H1 (cell line): ENCODE measurements at regions of chr3 and their contacts with region 1.

Region 1: GRCh38 chr3:4107430-4107829 is 195.7 kb upstream of the SETMAR start:
- DNase-seq: no peak
- H3K4me3 ChIP-seq: no peak overlapping the region
- H3K27ac ChIP-seq: no peak overlapping the region
- H3K4me1 ChIP-seq: no peaks in the 10 kb centered on the region
- H3K27me3 ChIP-seq: no peaks in the 10 kb centered on the region
- CTCF ChIP-seq: peak in 2 of 3 experiments; percentile 34 to 53; a peak in 3 of 4 replicates
- EP300 ChIP-seq: no peak
- POLR2A ChIP-seq: no peak
- RAD21 ChIP-seq: peak; percentile 25 to 50; a peak in 3 of 4 replicates

Region 2: DNA sequence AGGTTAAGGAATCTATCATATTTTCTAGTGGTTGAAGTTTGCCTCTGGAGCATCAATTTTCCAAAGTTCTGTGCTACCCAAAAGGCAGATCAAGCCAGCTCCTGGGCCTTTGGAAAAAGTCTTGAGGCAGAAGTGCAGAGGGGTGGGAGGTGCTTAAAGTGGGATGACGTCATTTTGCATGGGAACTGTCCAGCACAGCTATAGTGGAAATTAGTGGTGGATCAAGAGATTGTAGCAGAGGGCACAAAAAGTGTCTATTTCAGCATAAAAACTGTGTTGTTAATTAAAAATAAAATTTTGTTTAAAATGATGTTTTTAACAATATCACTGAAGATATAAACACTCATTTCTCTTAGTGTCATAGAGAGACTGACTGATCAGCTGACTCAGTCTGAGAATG is 86.3 kb before region 1 on chr3:
- CTCF ChIA-PET with region 1: no interaction called
- POLR2A ChIA-PET with region 1: no interaction called
- DNase-seq: no peak
- H3K4me3 ChIP-seq: no peak overlapping the region
- H3K27ac ChIP-seq: no peak overlapping the region
- H3K4me1 ChIP-seq: no peaks in the 10 kb centered on the region
- H3K27me3 ChIP-seq: no peaks in the 10 kb centered on the region
- CTCF ChIP-seq: no peak
- EP300 ChIP-seq: no peak
- POLR2A ChIP-seq: no peak
- RAD21 ChIP-seq: no peak

Region 3: GRCh38 chr3:4119119-4119518 is 11.7 kb after region 1 on chr3:
- CTCF ChIA-PET with region 1: interaction called, 13 read pairs
- POLR2A ChIA-PET with region 1: no interaction called
- DNase-seq: no peak
- H3K4me3 ChIP-seq: no peak overlapping the region
- H3K27ac ChIP-seq: no peak overlapping the region
- H3K4me1 ChIP-seq: no peaks in the 10 kb centered on the region
- H3K27me3 ChIP-seq: no peaks in the 10 kb centered on the region
- CTCF ChIP-seq: no peak
- EP300 ChIP-seq: no peak
- POLR2A ChIP-seq: no peak
- RAD21 ChIP-seq: no peak

Region 4: DNA sequence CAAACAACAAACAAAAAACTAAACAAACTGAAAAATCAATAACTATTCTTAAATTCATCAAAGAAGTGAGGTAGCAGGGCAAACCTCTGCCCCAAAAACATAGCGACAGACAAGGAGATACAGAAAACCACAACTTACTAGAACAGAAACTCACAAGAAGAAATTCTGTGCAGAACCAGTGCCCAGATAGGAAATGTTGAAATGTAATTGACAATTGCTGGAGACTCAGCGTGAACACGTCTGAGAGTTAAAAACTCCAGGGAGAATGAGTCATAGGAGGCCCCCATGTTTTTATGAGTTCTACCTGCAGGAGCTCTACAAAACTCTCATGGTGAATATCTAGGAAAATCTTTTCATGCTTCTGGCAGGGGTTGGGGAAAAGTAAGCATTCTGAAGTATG is 100.2 kb after region 1 on chr3:
- CTCF ChIA-PET with region 1: no interaction called
- POLR2A ChIA-PET with region 1: no interaction called
- DNase-seq: no peak
- H3K4me3 ChIP-seq: no peak overlapping the region
- H3K27ac ChIP-seq: no peak overlapping the region
- H3K4me1 ChIP-seq: no peaks in the 10 kb centered on the region
- H3K27me3 ChIP-seq: no peaks in the 10 kb centered on the region
- CTCF ChIP-seq: no peak
- EP300 ChIP-seq: no peak
- POLR2A ChIP-seq: no peak
- RAD21 ChIP-seq: no peak

Region 5: DNA sequence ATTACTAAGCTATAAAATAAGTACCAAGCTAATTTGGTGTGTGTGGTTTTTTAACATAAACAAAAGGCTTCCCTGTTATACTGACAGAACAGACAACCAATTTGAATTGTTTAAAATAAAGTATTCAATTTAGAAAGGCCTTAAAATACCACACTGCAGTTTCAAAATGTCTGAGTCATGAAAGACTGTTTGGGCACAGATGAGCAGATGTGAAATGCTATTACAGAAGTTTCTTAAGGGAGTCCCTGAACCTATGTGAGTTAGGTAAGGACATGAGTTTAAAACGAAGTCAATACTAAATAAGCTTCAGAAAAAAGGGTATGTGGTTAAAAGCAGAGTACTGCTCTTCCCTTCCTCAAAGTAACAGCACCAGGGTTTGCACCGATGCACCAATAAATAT is 126.1 kb after region 1 on chr3:
- CTCF ChIA-PET with region 1: no interaction called
- POLR2A ChIA-PET with region 1: no interaction called
- DNase-seq: no peak
- H3K4me3 ChIP-seq: no peak overlapping the region
- H3K27ac ChIP-seq: no peak overlapping the region
- H3K4me1 ChIP-seq: peaks cover 0 to 3% (median under 1%) of the 10 kb centered on the region in 4 experiments; a peak in 4 of 7 replicates
- H3K27me3 ChIP-seq: peaks cover 2 to 10% (median 8%) of the 10 kb centered on the region in 4 experiments; a peak in 5 of 7 replicates
- CTCF ChIP-seq: no peak
- EP300 ChIP-seq: no peak
- POLR2A ChIP-seq: no peak
- RAD21 ChIP-seq: no peak

Region 6: GRCh38 chr3:4601892-4602291 is 494.5 kb after region 1 on chr3:
- CTCF ChIA-PET with region 1: no interaction called
- POLR2A ChIA-PET with region 1: no interaction called
- DNase-seq: no peak
- H3K4me3 ChIP-seq: no peak overlapping the region
- H3K27ac ChIP-seq: no peak overlapping the region
- H3K4me1 ChIP-seq: peaks cover 3 to 11% (median 7%) of the 10 kb centered on the region in 4 experiments; a peak in 6 of 7 replicates
- H3K27me3 ChIP-seq: no peaks in the 10 kb centered on the region
- CTCF ChIP-seq: no peak
- EP300 ChIP-seq: no peak
- POLR2A ChIP-seq: no peak
- RAD21 ChIP-seq: no peak